Motor neuron (in vitro differentiated cells): ENCODE measurements at regions of chr7 and their contacts with region 1.

Region 1: DNA sequence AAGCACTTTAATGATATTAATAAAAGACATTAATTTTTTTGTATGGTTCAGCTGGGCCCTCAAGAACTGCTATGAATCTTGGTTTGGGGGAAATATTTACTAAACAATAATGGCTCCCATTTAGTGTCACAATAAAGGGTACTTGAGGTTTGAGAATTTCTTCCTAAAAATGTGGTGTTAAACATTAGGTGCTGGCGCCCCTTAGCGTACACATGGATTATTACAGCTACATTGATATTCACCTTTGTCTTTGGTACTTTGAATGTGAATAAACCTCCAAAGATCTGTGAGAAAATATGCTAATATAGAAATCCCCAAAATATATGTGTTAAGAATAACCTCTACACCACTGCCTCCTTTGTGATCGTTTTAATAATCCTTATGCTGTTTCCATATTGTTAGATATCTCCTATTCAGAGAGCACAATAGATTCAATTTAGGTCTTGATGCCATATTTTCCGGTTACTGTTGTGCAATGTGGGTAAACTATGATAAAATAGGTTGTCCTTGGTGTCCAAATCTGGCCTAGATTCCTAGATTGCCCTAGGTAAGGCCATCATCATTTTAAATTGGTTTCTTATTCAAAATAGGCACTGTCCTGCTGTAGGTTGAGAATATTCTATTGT is 161.8 kb upstream of the CACNA2D1 start:
- ATAC-seq: no peak
- H3K4me3 ChIP-seq: no peak overlapping the region
- H3K27ac ChIP-seq: no peak overlapping the region
- H3K4me1 ChIP-seq: peaks cover 6% of the 10 kb centered on the region in 2 donors

Region 2: DNA sequence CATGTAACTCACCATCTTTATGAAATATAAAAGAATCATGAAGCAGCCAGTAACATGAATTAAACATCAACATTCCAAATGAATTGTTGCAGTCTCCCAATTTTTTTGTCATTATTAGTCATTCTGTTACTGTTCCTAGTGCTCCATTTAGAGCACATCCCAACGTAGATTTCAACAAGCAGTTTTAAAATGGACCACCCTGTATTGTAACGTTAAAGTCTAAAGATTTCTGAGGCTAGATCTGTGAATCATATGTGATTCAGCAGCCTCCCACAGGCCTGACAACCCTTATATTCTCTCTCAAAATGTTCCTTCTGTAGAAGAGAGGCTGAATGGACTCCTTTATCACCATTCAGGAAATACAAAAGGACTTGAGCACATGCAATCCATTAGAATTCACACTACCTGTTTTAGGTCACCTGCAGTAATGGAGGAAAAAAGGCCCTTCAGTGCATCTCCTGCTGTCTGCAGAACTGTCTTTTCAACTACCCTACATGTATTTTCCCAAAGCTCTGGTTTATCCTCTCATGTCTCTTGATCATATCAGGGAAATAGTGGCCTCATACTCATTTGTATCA is 243.1 kb before region 1 on chr7:
- in situ Hi-C with region 1: no loop called
- ATAC-seq: peak in 2 of 8 experiments; percentile 27 to 55
- H3K4me3 ChIP-seq: no peak overlapping the region
- H3K27ac ChIP-seq: no peak overlapping the region
- H3K4me1 ChIP-seq: peaks cover 22 to 32% of the 10 kb centered on the region in 2 donors

Region 3: GRCh38 chr7:82699773-82700186 is 94.4 kb after region 1 on chr7:
- in situ Hi-C with region 1: loop called in 1 of 9 experiments (anchors 25 kb)
- ATAC-seq: peak in 3 of 8 experiments; percentile 13 to 69 (median 22)
- H3K4me3 ChIP-seq: no peak overlapping the region
- H3K27ac ChIP-seq: no peak overlapping the region
- H3K4me1 ChIP-seq: peaks cover 0 to 5% of the 10 kb centered on the region in 2 donors

Region 4: DNA sequence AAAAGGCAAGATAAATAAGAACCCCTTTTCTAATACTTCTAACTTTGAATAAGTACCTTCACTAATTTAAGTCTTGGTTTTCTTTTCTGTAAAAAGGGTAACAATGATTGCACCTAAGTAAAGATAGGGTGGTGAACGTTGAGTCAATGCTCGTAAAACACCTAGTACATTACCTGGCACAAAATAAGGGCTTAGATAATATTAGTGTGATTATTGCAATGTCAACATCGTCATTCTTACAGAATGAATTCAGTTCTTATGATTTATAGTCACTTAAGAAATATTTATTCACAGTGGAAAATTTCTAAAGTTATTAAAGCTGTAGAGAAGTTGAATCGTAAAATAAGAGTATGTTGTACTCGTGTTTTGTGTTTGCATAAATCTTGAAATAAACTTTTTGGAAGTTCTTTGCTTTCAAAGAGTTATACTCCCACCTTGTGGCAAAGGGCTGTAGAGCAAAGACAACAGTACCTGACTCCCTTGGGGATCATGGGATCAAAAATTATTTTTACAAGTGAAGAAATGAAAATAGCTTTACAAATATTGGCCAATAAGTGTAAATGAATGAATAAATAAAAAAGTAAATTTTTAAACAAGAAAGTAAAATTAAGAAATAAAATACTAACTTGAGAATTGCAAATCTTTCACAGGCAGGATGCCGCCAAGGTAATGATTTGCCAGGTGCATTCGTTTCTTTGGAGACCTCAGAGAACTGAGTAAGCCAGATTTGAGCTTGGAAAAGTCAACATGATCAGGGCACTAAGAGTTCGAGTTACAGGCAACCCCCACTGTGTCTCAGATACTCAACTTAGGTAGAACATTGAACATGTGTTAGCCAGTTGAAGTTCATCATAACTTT is 124.0 kb after region 1 on chr7:
- in situ Hi-C with region 1: loop called in 2 of 9 experiments (anchors 10 to 25 kb)
- ATAC-seq: peak in 3 of 8 experiments; percentile 21 to 32 (median 31)
- H3K4me3 ChIP-seq: no peak overlapping the region
- H3K27ac ChIP-seq: no peak overlapping the region
- H3K4me1 ChIP-seq: no peaks in the 10 kb centered on the region